ENCODE measurements at regions of chr9 and their contacts with region 1.

Region 1: DNA sequence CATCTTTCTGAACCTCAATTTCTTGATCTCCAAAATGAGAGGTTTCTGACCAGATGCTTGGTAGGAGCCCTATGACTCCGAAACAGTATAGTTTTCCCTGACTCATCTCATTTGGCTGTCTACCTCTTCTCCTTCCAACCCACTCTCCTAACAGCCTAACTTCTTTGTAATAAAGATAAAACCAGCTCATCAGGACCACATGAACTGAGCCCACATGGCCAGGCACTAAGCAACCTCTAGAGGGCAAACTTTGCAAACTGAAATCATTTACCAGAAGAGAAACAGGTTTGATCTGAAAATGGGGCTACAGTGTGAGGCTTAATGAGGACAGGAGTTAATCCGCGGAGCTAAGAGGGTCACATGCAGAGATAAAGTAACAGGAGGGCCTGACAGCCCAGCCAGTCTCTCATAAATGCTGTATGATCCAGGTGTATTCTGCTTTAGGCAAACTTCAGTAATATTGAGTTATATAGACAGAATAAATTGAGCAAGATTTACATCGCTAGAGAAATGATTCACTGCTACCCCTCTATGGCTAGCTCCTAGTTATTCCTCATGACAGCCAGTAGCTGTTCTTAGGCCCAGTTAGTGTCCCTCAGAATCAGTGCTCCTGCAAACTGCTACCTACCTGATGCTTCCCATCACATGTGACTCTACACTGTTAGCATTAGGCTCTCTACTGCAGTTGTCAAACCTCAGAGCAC is 64.6 kb downstream of the ABCA1 start:
- DNase-seq: peak; percentile 51 to 65 (median 60)
- H3K4me3 ChIP-seq: no peak overlapping the region
- H3K4me3 Mint-ChIP-seq: no peak overlapping the region
- H3K27ac ChIP-seq: no peak overlapping the region
- H3K27ac Mint-ChIP-seq: peak overlapping the region in 1 of 7 donors; percentile 50
- H3K4me1 ChIP-seq: no peaks in the 10 kb centered on the region
- H3K4me1 Mint-ChIP-seq: peaks cover 0 to 9% (median 3%) of the 10 kb centered on the region in 4 donors
- H3K27me3 ChIP-seq: no peaks in the 10 kb centered on the region
- H3K27me3 Mint-ChIP-seq: no peaks in the 10 kb centered on the region

Region 2: DNA sequence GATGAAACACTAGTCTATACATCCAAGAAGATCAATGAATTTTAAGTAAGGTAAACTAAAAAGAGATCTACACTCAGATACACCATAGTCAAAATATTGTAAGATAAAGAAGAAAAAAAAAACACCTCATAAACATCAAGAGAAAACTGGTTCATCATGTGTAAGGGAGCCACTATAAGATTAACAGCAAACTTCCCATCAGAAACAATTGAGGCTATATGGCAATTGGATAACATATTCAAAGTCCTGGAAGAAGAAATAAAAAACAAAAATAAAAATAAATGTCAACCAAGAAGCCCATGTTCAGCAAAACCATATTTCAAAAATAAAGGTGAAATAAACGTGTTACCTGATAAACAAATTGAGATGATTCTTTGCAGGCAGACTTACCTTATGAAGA is 290.7 kb before region 1 on chr9:
- CTCF ChIA-PET with region 1: no interaction called
- POLR2A ChIA-PET with region 1: no interaction called
- intact Hi-C with region 1: no loop called
- DNase-seq: no peak
- H3K4me3 ChIP-seq: no peak overlapping the region
- H3K4me3 Mint-ChIP-seq: no peak overlapping the region
- H3K27ac ChIP-seq: no peak overlapping the region
- H3K27ac Mint-ChIP-seq: no peak overlapping the region
- H3K4me1 ChIP-seq: no peaks in the 10 kb centered on the region
- H3K4me1 Mint-ChIP-seq: no peaks in the 10 kb centered on the region
- H3K27me3 ChIP-seq: no peaks in the 10 kb centered on the region
- H3K27me3 Mint-ChIP-seq: no peaks in the 10 kb centered on the region

Region 3: GRCh38 chr9:104892701-104893100 is 29.4 kb after region 1 on chr9:
- CTCF ChIA-PET with region 1: interaction called, 10 read pairs
- POLR2A ChIA-PET with region 1: no interaction called
- intact Hi-C with region 1: no loop called
- DNase-seq: no peak
- H3K4me3 ChIP-seq: no peak overlapping the region
- H3K4me3 Mint-ChIP-seq: no peak overlapping the region
- H3K27ac ChIP-seq: no peak overlapping the region
- H3K27ac Mint-ChIP-seq: no peak overlapping the region
- H3K4me1 ChIP-seq: no peaks in the 10 kb centered on the region
- H3K4me1 Mint-ChIP-seq: no peaks in the 10 kb centered on the region
- H3K27me3 ChIP-seq: no peaks in the 10 kb centered on the region
- H3K27me3 Mint-ChIP-seq: no peaks in the 10 kb centered on the region

Measured in CD4-positive, alpha-beta memory T cell (primary cell).